G401 (cell line): ENCODE measurements at regions of chr2 and their contacts with region 1.

Region 1: DNA sequence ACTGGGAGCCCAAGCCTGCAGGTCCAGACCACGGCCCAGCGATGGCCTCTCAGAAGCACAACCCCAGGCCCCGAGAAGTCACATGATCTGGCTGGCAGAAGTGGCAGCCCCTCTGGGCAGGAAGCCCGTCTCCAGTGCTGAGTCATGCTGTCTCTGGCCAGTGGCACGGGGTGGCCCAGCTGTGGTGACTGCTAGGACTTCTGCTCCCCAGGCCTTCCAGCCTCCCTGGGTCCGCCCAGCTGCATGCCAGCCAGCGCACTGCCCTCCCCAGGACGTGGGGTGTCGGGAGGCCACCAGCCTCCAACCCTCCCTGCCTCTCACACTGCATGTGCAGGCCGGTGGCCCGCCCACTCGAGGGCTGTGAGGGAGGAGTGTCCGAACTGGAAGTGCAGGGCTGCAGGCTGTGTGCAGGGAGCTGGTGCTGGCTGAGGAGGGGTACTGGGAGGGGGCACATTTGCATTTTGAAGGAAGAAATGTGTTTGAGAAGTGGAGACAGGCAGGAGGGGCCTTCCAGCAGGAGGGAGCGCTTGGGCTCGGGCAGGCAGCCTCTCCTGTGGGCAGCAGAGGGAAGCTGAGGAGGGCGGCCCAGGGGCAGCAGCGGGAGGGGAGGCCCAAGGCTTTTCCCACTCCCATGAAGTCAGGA is 17.0 kb upstream of the HPCAL1 start:
- DNase-seq: peak; percentile 20

Region 2: GRCh38 chr2:10245656-10246055 is 40.0 kb before region 1 on chr2:
- in situ Hi-C with region 1: loop called (anchors 5 kb)
- DNase-seq: no peak